ENCODE measurements at regions of chr5 and their contacts with region 1.

Region 1: GRCh38 chr5:6745706-6746222 is 32.5 kb downstream of the TENT4A start:
- DNase-seq: no peak

Region 2: DNA sequence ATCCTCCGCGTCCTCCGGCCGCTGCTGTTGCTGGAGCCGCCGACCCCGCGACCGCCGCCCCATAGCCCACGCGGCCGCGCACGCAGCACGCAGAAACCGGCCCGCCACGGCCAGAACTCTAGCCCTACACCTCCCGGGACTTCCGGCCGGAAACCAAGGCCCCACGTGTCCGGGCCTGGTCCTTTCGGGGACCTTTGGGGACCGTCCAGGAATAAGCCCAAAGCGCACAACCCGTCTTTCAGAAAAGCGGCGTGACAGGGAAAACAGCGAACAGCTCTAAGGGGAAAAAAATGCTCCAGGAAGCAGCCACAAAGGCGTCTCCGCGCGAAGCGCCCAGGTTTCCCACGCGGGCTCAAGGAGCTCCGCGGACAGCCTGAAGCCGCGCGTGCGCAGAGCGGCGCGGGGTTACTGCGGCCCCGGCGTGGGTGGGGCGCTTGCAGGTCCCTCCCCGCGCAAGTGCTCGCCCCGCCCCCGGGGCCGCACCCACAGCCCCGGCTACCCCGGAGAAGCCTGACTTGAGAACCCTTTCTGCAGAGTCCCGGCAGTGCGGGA is 112.8 kb before region 1 on chr5 and contains the starts of genes NSUN2 and SRD5A1:
- intact Hi-C with region 1: loop called (anchors 2 kb)
- DNase-seq: peak; percentile 96
- total RNA-seq, gene NSUN2: 39.9 TPM
- total RNA-seq, gene SRD5A1: 4.2 TPM

Region 3: GRCh38 chr5:7488734-7489133 is 743.0 kb after region 1 on chr5:
- intact Hi-C with region 1: no loop called
- DNase-seq: no peak